ENCODE measurements at regions of chr9 and their contacts with region 1.

Region 1: GRCh38 chr9:126822278-126822677 is 17.4 kb downstream of the ZBTB43 start:
- DNase-seq: no peak
- ATAC-seq: no peak
- H3K4me3 ChIP-seq: no peak overlapping the region
- H3K27ac ChIP-seq: no peak overlapping the region
- H3K4me1 ChIP-seq: no peaks in the 10 kb centered on the region
- H3K27me3 ChIP-seq: no peaks in the 10 kb centered on the region
- CTCF ChIP-seq: no peak

Region 2: DNA sequence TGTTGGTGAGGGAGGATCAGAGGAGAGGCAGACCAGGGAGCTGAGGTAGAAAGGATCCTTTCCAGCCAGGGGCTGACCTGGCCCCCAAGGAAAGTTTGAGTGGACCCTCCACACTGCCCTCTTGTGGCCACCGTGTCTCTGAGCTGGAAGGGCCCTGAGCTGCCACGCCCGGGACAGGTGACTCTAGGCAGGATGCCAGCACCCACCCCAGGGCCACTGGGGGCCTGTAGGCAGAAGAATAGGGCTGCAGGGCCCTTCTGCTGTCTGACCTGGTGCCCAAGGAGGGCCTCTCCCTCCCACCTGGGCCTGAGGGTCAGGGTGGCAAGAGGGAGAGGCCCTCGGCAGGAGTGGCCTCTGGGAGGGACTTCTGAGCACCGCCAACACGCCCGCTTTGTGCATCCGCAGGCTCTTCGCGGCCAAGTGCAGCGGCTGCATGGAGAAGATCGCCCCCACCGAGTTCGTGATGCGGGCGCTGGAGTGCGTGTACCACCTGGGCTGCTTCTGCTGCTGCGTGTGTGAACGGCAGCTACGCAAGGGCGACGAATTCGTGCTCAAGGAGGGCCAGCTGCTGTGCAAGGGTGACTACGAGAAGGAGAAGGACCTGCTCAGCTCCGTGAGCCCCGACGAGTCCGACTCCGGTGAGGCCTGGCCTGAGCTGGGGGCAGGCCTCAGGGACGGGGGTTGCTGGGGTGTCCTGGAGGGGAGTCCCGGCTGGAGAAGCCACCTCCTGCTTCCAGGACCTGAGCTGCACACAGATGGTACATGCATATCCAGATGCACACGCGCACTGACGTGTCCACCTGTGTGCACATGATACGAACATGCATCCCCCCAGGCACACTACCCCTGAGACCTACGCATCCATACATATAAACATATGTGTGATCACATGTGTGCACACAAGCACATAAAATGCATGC is 131.6 kb before region 1 on chr9:
- CTCF ChIA-PET with region 1: no interaction called
- POLR2A ChIA-PET with region 1: no interaction called
- intact Hi-C with region 1: no loop called
- DNase-seq: peak; percentile 67
- ATAC-seq: peak; percentile 65
- H3K4me3 ChIP-seq: no peak overlapping the region
- H3K27ac ChIP-seq: no peak overlapping the region
- H3K4me1 ChIP-seq: no peaks in the 10 kb centered on the region
- H3K27me3 ChIP-seq: no peaks in the 10 kb centered on the region
- CTCF ChIP-seq: peak; percentile 69

Region 3: DNA sequence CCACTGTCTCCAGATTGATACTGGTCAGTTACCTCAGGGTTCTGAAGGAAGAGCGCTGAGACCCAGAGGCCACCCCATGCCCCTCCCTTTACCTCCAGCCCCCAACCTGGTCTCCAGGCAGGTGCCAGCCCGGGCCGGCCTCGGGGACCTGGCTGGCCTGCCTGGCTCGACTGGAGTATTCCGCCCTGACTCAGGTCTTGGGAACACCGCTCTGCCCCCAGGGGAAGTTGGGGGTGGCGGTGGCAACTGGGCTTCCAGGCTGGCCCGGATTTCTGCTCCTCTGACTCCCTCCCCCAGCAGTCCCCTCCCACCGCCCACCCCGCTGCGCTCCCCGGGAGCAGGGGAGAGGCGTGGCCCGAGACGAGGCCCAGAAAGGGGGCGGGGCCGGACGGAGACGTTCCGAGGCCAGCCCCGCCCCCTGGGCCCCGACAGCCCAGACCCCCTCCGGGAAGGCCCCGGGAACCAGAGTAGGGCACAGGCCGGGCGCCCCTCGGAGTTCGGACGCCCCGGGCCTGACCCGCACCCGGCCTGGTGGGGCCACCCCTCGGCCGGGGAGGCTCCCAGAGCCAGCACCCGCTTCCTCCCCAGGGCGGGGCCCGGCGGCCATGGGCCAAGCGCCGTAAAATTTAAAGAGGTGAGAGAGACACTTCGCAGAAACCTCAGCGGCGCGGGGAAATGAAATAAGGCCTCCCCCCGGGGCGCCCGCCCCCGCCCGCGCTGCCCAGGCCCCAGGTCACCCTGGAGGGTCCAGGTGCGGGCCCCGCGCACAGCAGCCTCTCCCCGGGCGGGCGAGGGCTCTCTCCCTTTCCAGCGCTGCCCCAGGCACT is 99.8 kb before region 1 on chr9:
- CTCF ChIA-PET with region 1: no interaction called
- POLR2A ChIA-PET with region 1: no interaction called
- intact Hi-C with region 1: no loop called
- DNase-seq: peak; percentile 70
- ATAC-seq: peak; percentile 77
- H3K4me3 ChIP-seq: peak overlapping the region; percentile 73
- H3K27ac ChIP-seq: no peak overlapping the region
- H3K4me1 ChIP-seq: no peaks in the 10 kb centered on the region
- H3K27me3 ChIP-seq: peaks cover 19% of the 10 kb centered on the region
- CTCF ChIP-seq: no peak

Region 4: GRCh38 chr9:126838895-126839294 is 16.6 kb after region 1 on chr9:
- CTCF ChIA-PET with region 1: interaction called, 5 read pairs
- POLR2A ChIA-PET with region 1: interaction called, 11 read pairs
- intact Hi-C with region 1: no loop called
- DNase-seq: no peak
- ATAC-seq: no peak
- H3K4me3 ChIP-seq: no peak overlapping the region
- H3K27ac ChIP-seq: no peak overlapping the region
- H3K4me1 ChIP-seq: peaks cover 7% of the 10 kb centered on the region
- H3K27me3 ChIP-seq: no peaks in the 10 kb centered on the region
- CTCF ChIP-seq: no peak